ENCODE measurements at regions of chr3 and their contacts with region 1.

Region 1: GRCh38 chr3:11643605-11644087 is at the start of gene VGLL4:
- DNase-seq: peak; percentile 42 to 64 (median 44)
- H3K4me3 ChIP-seq: peak within 1 kb of the TSS; percentile 79 to 98
- H3K4me3 Mint-ChIP-seq: peak within 1 kb of the TSS; percentile 95 to 100 (median 98)
- H3K27ac ChIP-seq: peak within 1 kb of the TSS; percentile 72
- H3K27ac Mint-ChIP-seq: peak within 1 kb of the TSS; percentile 93 to 100 (median 98)
- H3K4me1 ChIP-seq: peaks cover 28% of the 10 kb centered on the region
- H3K4me1 Mint-ChIP-seq: peaks cover 19 to 54% (median 28%) of the 10 kb centered on the region in 4 donors
- H3K27me3 ChIP-seq: no peaks in the 10 kb centered on the region
- H3K27me3 Mint-ChIP-seq: no peaks in the 10 kb centered on the region
- total RNA-seq, gene VGLL4: 29.2 to 30.3 TPM

Region 2: GRCh38 chr3:11379233-11379823 is 264.3 kb before region 1 on chr3:
- CTCF ChIA-PET with region 1: interaction called, 109 read pairs
- POLR2A ChIA-PET with region 1: interaction called, 3 read pairs
- intact Hi-C with region 1: loop called (anchors 2 kb)
- DNase-seq: peak in 4 of 5 donors; percentile 30 to 41 (median 34)
- H3K4me3 ChIP-seq: no peak overlapping the region
- H3K4me3 Mint-ChIP-seq: no peak overlapping the region
- H3K27ac ChIP-seq: no peak overlapping the region
- H3K27ac Mint-ChIP-seq: no peak overlapping the region
- H3K4me1 ChIP-seq: no peaks in the 10 kb centered on the region
- H3K4me1 Mint-ChIP-seq: no peaks in the 10 kb centered on the region
- H3K27me3 ChIP-seq: no peaks in the 10 kb centered on the region
- H3K27me3 Mint-ChIP-seq: no peaks in the 10 kb centered on the region

Region 3: DNA sequence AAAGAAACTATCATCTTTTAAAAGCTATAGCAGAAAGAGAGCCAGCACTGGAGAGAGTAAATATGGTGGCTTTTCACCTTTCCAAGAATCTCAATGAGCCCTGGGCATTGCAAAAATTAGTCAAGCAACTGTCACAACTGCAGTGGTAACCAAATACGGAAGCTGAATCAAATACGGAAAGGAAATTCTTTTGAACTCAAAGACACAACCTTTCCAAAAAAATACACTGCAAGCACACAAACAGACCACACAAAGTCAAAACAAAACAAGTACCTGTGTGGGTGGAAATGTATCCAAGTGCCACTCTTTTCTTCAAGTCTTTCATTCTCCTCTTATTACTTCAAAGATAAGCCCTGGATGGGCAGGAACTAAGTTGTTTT is 17.6 kb before region 1 on chr3:
- CTCF ChIA-PET with region 1: interaction called, 5 read pairs
- POLR2A ChIA-PET with region 1: interaction called, 10 read pairs
- intact Hi-C with region 1: loop called (anchors 2 kb)
- DNase-seq: peak in 1 of 5 donors; percentile 32
- H3K4me3 ChIP-seq: no peak overlapping the region
- H3K4me3 Mint-ChIP-seq: peak overlapping the region in 6 of 8 donors; percentile 1 to 84 (median 40)
- H3K27ac ChIP-seq: no peak overlapping the region
- H3K27ac Mint-ChIP-seq: peak overlapping the region in 5 of 7 donors; percentile 0 to 93 (median 83)
- H3K4me1 ChIP-seq: peaks cover 35% of the 10 kb centered on the region
- H3K4me1 Mint-ChIP-seq: peaks cover 45 to 72% (median 55%) of the 10 kb centered on the region in 4 donors
- H3K27me3 ChIP-seq: no peaks in the 10 kb centered on the region
- H3K27me3 Mint-ChIP-seq: no peaks in the 10 kb centered on the region

Region 4: DNA sequence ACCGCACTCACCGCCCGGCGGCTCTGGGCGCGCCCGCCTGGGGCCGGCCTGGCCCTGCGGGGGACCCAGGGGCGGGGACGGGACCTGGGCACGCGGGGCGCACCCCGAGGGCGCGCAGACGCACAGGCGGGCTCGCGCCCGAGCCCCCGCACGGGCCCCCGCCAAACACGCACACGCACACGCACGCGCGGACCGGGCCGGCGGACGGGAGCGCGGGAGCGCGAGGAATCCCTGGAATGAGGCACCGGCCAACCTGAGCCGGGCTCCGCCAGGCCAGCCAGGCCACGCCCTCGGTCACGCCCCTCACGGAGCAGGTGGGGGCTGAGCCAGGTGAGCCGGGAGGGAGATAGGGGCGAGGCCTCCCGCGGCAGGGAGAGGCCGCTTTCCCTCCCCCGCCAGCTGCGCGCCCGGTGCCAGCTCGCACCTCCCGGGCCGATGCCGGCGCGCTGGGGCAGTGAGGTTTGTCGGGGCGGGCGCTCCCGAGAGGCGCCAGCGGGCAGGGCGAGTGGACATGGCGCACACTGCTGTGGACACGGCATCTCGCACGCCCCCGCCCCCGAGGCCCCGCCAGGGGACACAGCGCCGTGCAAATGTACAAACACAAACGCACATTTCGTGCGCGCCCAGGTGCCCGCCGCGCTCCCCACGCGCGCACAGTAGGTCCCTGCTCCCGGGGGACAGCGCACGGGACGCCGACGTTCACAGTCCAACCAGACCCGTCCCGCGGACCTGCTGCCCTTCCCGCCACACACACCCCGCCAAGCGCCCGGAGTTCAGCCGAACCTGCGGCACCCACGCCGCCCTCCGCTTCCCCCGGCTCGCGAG is 76.0 kb after region 1 on chr3:
- CTCF ChIA-PET with region 1: no interaction called
- POLR2A ChIA-PET with region 1: interaction called, 4 read pairs
- intact Hi-C with region 1: loop called (anchors 2 kb)
- DNase-seq: peak; percentile 76 to 87 (median 78)
- H3K4me3 ChIP-seq: peak overlapping the region in 1 of 2 donors; percentile 59
- H3K4me3 Mint-ChIP-seq: peak overlapping the region; percentile 64 to 97 (median 84)
- H3K27ac ChIP-seq: peak overlapping the region; percentile 64
- H3K27ac Mint-ChIP-seq: peak overlapping the region in 2 of 7 donors; percentile 59 to 70
- H3K4me1 ChIP-seq: peaks cover 14% of the 10 kb centered on the region
- H3K4me1 Mint-ChIP-seq: peaks cover 10 to 32% (median 23%) of the 10 kb centered on the region in 4 donors
- H3K27me3 ChIP-seq: no peaks in the 10 kb centered on the region
- H3K27me3 Mint-ChIP-seq: peaks cover 0 to 4% of the 10 kb centered on the region in 2 donors